PC-9 (cell line): ENCODE measurements at regions of chr2 and their contacts with region 1.

Region 1: GRCh38 chr2:178414266-178415247 is 36.4 kb downstream of the PRKRA start:
- DNase-seq: peak; percentile 91 to 93
- H3K4me3 ChIP-seq: peak overlapping the region; percentile 72
- H3K27ac ChIP-seq: peak overlapping the region; percentile 55; the same call in 1 of the 2 replicates
- H3K4me1 ChIP-seq: peaks cover 18% of the 10 kb centered on the region
- H3K27me3 ChIP-seq: no peaks in the 10 kb centered on the region
- CTCF ChIP-seq: peak; percentile 99

Region 2: DNA sequence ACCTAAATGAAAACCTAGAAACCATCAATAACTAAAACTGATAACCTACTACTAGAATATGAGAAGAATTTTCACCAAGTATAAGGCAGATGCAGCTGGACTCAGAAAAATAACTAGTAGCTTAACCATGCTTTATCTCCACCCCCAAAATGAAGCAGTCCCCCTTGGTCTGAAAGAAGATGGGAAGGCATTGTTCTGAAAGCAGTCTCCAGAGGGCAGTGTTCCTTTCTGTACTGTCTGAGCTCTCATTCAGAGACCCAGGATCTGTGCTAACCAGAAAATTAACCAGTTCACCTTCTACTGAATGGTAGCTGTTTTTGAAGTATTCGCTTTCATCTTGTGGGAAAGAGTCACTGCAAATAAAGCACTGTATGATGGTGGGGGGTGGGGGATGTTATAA is 615.0 kb before region 1 on chr2:
- CTCF ChIA-PET with region 1: no interaction called
- POLR2A ChIA-PET with region 1: no interaction called
- intact Hi-C with region 1: loop called (anchors 5 kb)
- DNase-seq: peak in 1 of 2 experiments; percentile 18
- H3K4me3 ChIP-seq: no peak overlapping the region
- H3K27ac ChIP-seq: no peak overlapping the region
- H3K4me1 ChIP-seq: no peaks in the 10 kb centered on the region
- H3K27me3 ChIP-seq: no peaks in the 10 kb centered on the region
- CTCF ChIP-seq: peak; percentile 85

Region 3: GRCh38 chr2:177983183-177983788 is 431.3 kb before region 1 on chr2:
- CTCF ChIA-PET with region 1: interaction called, 14 read pairs
- POLR2A ChIA-PET with region 1: no interaction called
- intact Hi-C with region 1: loop called (anchors 2 kb)
- DNase-seq: peak; percentile 43 to 56
- H3K4me3 ChIP-seq: no peak overlapping the region
- H3K27ac ChIP-seq: no peak overlapping the region
- H3K4me1 ChIP-seq: no peaks in the 10 kb centered on the region
- H3K27me3 ChIP-seq: no peaks in the 10 kb centered on the region
- CTCF ChIP-seq: peak; percentile 96

Region 4: GRCh38 chr2:178142274-178143065 is 272.1 kb before region 1 on chr2:
- CTCF ChIA-PET with region 1: interaction called, 12 read pairs
- POLR2A ChIA-PET with region 1: no interaction called
- intact Hi-C with region 1: no loop called
- DNase-seq: no peak
- H3K4me3 ChIP-seq: no peak overlapping the region
- H3K27ac ChIP-seq: no peak overlapping the region
- H3K4me1 ChIP-seq: no peaks in the 10 kb centered on the region
- H3K27me3 ChIP-seq: no peaks in the 10 kb centered on the region
- CTCF ChIP-seq: no peak

Region 5: GRCh38 chr2:178306352-178307073 is 108.0 kb before region 1 on chr2:
- CTCF ChIA-PET with region 1: no interaction called
- POLR2A ChIA-PET with region 1: no interaction called
- intact Hi-C with region 1: loop called (anchors 2 kb)
- DNase-seq: peak in 1 of 2 experiments; percentile 38
- H3K4me3 ChIP-seq: no peak overlapping the region
- H3K27ac ChIP-seq: no peak overlapping the region
- H3K4me1 ChIP-seq: peaks cover 11% of the 10 kb centered on the region; the same call in 1 of the 2 replicates
- H3K27me3 ChIP-seq: no peaks in the 10 kb centered on the region
- CTCF ChIP-seq: peak; percentile 67

Region 6: GRCh38 chr2:178478439-178479274 is 64.1 kb after region 1 on chr2 and contains the start of gene FKBP7:
- CTCF ChIA-PET with region 1: interaction called, 3 read pairs
- POLR2A ChIA-PET with region 1: no interaction called
- intact Hi-C with region 1: loop called (anchors 1 kb)
- DNase-seq: peak; percentile 71 to 85
- H3K4me3 ChIP-seq: peak within 1 kb of the TSS; percentile 77
- H3K27ac ChIP-seq: peak within 1 kb of the TSS; percentile 56
- H3K4me1 ChIP-seq: peaks cover 45% of the 10 kb centered on the region
- H3K27me3 ChIP-seq: no peaks in the 10 kb centered on the region
- CTCF ChIP-seq: peak; percentile 87
- total RNA-seq, gene FKBP7: 3.8 and 6.1 TPM in 2 replicates

Region 7: DNA sequence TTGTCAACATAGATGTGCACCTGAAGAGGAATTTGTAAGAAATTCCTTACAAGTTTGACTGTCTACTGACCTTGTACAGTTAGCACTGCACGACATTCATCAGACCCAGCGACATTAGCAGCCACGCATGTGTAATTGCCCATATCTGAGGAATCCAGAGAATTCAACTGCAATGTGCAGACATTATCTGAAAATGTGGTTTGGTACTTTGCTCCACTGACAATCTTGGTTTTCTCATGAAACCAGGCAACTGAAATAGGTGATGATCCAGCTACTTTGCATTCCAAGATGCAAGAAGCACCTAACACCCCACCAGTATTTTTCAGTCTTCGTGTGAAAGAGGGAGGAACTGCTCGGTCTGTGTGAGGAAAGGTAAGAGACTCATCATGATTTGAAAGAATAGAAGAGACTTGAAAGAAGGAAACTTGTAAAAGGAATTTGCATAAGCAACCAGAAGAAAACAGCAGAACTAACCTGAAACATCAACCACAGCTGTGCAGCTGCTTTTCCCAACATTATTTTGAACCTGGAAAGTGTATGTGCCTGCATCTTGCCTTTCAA is 309.3 kb after region 1 on chr2:
- CTCF ChIA-PET with region 1: no interaction called
- POLR2A ChIA-PET with region 1: no interaction called
- intact Hi-C with region 1: no loop called
- DNase-seq: no peak
- H3K4me3 ChIP-seq: no peak overlapping the region
- H3K27ac ChIP-seq: no peak overlapping the region
- H3K4me1 ChIP-seq: no peaks in the 10 kb centered on the region
- H3K27me3 ChIP-seq: peaks cover 87% of the 10 kb centered on the region
- CTCF ChIP-seq: no peak

Region 8: DNA sequence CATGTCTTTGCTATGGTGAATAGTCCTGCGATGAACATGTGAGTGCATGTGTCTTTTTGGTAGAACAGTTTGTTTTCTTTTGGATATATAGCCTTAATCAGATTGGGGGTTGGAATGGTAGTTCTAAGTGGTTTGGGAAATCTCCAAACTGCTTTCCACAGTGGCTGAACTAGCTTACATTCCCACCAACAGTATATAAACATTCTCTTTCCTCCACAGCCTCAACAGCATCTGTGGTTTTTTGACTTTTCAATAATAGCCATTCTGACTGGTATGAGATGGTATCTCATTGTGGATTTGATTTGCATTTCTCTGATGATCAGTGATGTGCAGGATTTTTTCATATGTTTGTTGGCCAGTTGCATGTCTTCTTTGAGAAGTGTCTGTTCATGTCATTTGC is 962.3 kb after region 1 on chr2:
- CTCF ChIA-PET with region 1: no interaction called
- POLR2A ChIA-PET with region 1: no interaction called
- intact Hi-C with region 1: no loop called
- DNase-seq: no peak
- H3K4me3 ChIP-seq: no peak overlapping the region
- H3K27ac ChIP-seq: no peak overlapping the region
- H3K4me1 ChIP-seq: no peaks in the 10 kb centered on the region
- H3K27me3 ChIP-seq: no peaks in the 10 kb centered on the region
- CTCF ChIP-seq: no peak